Posterior vena cava (tissue), 2 donors: ENCODE measurements at regions of chr7 and their contacts with region 1.

Region 1: DNA sequence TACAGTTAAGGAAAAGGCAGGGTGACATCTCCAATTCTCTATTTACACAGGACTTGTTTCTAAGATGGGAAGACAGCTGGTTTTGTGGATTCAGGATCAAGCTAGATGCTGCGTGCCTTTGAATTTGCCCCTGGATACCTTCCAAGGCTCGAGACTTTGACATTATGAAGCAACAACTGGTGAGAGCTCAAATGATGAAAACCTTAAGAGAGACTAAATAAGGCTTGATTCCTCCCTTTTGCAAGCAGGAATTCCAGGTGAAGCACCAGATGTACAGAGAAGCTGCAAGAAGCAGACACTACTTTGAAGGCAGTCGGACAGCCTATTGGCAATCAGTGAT is 81.0 kb downstream of the ATXN7L1 start:
- DNase-seq: no peak

Region 2: DNA sequence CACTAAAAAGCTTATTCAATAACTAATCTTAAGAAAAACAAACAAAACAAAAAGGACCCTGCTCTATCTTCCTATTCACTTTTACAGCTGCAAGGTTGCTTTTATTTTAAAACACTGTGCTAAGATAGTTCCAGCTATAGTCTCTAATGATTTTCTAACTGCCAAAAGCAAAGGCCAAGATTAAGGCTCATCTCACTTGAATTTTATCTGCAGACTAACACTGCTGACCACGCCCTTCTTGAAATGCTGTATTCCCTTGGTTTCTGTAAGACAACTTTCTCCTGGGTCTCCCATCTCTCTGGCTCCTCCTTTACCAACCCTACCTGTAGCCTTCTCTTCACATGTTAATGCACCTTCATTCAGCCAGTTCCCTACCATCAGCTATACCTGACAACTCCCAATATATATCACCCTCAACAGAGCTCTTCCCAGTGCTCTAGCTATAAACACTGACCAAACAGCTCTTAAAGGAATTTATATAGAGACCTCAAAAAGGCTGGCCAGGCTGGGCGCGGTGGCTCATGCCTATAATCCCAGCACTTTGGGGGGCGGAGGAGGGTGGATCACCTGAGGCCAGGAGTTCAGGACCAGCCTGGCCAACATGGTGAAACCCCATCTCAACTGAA is 418.3 kb before region 1 on chr7:
- intact Hi-C with region 1: no loop called
- DNase-seq: no peak

Region 3: DNA sequence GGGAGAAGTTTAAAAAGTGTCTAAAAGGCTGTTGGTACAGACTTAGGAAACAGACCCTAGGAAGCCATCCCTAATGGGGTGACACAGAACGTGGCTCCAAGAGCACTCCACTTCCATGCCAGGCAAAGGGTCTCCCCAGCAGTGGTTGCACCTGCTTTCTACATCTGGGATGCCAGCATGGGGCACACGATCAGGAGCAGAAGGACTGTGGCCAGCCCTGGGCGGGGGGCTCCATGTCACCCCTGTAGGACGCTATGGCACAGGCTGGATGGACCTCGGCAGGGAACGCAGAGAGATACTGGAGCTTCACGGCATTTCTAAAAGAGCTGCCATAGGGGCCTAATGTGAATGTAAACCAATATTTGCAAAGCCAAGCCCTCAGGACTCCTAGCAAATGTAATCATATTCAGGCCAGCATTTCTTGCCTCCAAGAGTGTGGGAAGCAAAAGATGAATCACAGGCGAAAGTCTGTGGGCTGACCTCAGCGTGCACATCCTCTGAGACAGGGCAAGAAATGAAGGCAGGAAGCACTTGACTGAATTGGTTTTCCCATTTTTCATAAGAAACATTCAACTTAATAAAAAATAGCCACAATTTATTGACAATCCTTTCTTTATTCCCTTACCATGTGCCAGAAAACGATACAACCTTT is 12.8 kb before region 1 on chr7:
- intact Hi-C with region 1: loop called in 1 of 2 experiments (anchors 2 kb)
- DNase-seq: no peak

Region 4: GRCh38 chr7:105838627-105839231 is 43.4 kb after region 1 on chr7:
- intact Hi-C with region 1: loop called in 1 of 2 experiments (anchors 1 kb)
- DNase-seq: no peak

Region 5: DNA sequence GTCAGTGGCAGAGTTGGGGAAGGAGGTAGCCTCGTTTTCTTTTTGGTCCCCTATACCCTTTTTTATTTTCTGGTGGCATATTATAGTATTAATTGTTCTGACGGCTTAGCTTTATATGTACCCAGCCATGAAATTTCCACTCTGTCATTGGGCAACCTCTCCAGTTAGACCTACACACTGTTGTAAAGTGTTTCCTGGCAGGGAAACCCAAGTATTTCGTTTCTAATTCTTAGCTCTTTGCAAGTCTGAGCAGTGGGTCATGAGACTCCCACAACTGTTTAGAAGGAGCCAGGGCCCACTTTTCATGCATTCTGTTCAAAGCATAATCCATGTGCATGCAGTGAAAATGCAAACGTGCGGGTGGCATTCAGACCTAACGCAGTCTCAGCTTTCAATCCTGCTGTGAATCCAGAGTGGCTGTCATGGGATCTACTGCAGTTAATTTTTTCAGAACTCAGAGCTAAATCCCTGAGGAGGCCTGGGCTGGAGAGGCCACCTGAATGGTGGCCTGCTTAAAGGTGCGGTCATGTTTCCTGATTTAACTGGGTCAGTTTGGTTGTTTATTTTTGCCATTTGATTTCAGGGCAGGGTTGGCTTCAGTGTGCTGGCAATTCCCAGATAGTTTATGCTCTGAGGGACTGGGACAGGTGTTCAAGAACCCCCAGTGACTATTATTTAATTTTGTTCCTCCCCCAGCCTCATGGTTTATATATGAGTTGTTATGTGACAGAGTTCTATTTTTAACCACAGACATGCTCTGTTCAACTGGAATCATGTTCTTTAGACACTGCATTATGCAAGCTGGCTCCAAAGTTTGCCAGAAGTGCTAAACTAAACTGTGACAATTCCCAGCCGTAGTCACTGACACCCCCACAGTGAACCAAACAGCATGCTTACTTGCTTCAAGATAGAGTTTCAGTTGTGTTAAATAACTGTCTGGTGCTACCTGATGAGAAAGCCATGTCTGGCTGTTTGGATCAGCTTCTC is 344.2 kb after region 1 on chr7:
- intact Hi-C with region 1: loop called in 1 of 2 experiments (anchors 10 kb)
- DNase-seq: no peak